ENCODE measurements at regions of chr15 and their contacts with region 1.

Region 1: DNA sequence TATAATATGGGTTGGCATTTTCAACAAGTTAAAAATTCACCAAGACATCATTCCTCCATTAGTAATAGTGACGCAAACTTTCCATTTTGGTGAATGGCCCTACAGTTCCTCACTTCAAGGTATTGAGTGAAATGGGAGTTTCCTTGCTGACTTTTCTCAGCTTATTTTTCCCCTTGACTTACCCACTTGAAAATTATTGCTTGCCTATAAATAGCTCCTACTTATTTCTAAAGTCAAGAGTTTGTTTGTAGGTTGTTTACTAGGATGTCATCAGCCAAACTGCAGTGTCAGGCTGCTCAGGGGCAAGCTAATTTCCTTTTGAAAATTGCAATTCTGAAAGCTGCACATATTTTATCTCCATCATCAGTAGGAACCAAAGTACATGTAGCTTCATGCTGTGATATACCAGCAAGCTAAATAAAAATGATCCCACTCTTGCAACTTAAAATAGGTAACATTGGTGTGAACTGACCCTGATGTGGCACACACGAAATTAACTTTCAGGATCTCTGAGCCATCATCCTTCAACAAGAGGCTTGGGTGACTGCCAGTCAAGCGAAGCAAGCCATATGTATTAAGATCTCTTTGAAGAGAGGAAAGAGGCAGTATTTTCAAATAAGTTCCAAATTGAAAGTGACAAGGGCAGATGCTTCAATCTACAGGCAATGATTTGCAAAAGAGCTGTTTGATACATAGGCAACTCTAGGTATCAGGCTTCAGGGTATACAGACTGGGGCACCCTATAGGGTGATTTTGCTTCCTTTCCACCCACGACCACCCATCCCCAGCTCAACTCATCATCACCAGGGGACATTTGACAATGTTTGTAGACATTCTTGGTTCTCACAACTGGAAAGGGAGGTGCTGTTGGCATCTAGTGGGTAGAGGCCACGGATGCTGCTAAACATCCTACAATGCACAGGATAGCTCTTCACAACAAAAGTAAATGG is 66.8 kb upstream of the RASGRP1 start:
- DNase-seq: no peak
- H3K4me3 ChIP-seq: no peak overlapping the region
- H3K27ac ChIP-seq: no peak overlapping the region
- H3K4me1 ChIP-seq: peaks cover 6% of the 10 kb centered on the region
- CTCF ChIP-seq: no peak

Region 2: DNA sequence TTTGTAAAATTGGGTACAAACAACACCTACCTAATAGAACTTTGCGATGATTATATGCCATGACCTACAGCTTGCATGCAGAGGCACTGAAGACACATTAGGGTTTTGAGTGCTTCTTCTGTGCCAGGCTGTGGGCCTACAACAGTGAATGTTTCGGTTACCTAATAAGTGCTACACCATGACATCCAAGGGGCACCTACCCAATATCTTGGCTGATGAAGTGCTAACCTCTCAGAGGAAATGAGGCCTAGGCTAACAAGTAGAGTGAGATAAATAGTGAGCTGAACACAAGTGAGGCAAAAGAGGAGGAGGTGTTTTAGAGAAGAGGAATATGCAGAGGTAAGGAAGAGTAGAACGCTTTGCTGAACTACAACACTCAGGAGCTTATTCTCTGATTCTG is 54.6 kb before region 1 on chr15:
- CTCF ChIA-PET with region 1: no interaction called
- POLR2A ChIA-PET with region 1: interaction called, 3 read pairs
- intact Hi-C with region 1: loop called (anchors 5 kb)
- DNase-seq: no peak
- H3K4me3 ChIP-seq: no peak overlapping the region
- H3K27ac ChIP-seq: no peak overlapping the region
- H3K4me1 ChIP-seq: no peaks in the 10 kb centered on the region
- CTCF ChIP-seq: no peak

Measured in OCI-LY7 (cell line).